Calu3 (cell line): ENCODE measurements at regions of chr3 and their contacts with region 1.

Region 1: GRCh38 chr3:22555753-22556435 is 647.2 kb upstream of the UBE2E2 start:
- DNase-seq: no peak
- H3K4me3 Mint-ChIP-seq: no peak overlapping the region
- H3K27ac Mint-ChIP-seq: no peak overlapping the region
- H3K4me1 Mint-ChIP-seq: no peaks in the 10 kb centered on the region
- H3K27me3 Mint-ChIP-seq: no peaks in the 10 kb centered on the region
- CTCF ChIP-seq: no peak

Region 2: GRCh38 chr3:22175947-22176346 is 379.9 kb before region 1 on chr3:
- CTCF ChIA-PET with region 1: no interaction called
- intact Hi-C with region 1: loop called (anchors 5 kb)
- DNase-seq: no peak
- H3K4me3 Mint-ChIP-seq: no peak overlapping the region
- H3K27ac Mint-ChIP-seq: no peak overlapping the region
- H3K4me1 Mint-ChIP-seq: no peaks in the 10 kb centered on the region
- H3K27me3 Mint-ChIP-seq: no peaks in the 10 kb centered on the region
- CTCF ChIP-seq: no peak

Region 3: GRCh38 chr3:22671848-22672247 is 116.0 kb after region 1 on chr3:
- CTCF ChIA-PET with region 1: no interaction called
- intact Hi-C with region 1: loop called (anchors 5 kb)
- DNase-seq: no peak
- H3K4me3 Mint-ChIP-seq: no peak overlapping the region
- H3K27ac Mint-ChIP-seq: no peak overlapping the region
- H3K4me1 Mint-ChIP-seq: no peaks in the 10 kb centered on the region
- H3K27me3 Mint-ChIP-seq: no peaks in the 10 kb centered on the region
- CTCF ChIP-seq: no peak

Region 4: GRCh38 chr3:24004171-24004938 is 1448.5 kb after region 1 on chr3:
- CTCF ChIA-PET with region 1: no interaction called
- intact Hi-C with region 1: no loop called
- DNase-seq: no peak
- H3K4me3 Mint-ChIP-seq: no peak overlapping the region
- H3K27ac Mint-ChIP-seq: no peak overlapping the region
- H3K4me1 Mint-ChIP-seq: peaks cover 2% of the 10 kb centered on the region
- H3K27me3 Mint-ChIP-seq: no peaks in the 10 kb centered on the region
- CTCF ChIP-seq: no peak